Psoas muscle (tissue), 8 donors: ENCODE measurements at regions of chrX and their contacts with region 1.

Region 1: GRCh38 chrX:110450050-110450449 is 91.4 kb downstream of the RTL9 start:
- DNase-seq: peak; percentile 56 to 79
- ATAC-seq: peak; percentile 81 to 90 (median 88)
- H3K4me3 ChIP-seq: no peak overlapping the region
- H3K27ac ChIP-seq: no peak overlapping the region
- H3K4me1 ChIP-seq: no peaks in the 10 kb centered on the region
- H3K27me3 ChIP-seq: peaks cover 0 to 13% (median 0%) of the 10 kb centered on the region in 3 donors
- CTCF ChIP-seq: peak; percentile 76

Region 2: DNA sequence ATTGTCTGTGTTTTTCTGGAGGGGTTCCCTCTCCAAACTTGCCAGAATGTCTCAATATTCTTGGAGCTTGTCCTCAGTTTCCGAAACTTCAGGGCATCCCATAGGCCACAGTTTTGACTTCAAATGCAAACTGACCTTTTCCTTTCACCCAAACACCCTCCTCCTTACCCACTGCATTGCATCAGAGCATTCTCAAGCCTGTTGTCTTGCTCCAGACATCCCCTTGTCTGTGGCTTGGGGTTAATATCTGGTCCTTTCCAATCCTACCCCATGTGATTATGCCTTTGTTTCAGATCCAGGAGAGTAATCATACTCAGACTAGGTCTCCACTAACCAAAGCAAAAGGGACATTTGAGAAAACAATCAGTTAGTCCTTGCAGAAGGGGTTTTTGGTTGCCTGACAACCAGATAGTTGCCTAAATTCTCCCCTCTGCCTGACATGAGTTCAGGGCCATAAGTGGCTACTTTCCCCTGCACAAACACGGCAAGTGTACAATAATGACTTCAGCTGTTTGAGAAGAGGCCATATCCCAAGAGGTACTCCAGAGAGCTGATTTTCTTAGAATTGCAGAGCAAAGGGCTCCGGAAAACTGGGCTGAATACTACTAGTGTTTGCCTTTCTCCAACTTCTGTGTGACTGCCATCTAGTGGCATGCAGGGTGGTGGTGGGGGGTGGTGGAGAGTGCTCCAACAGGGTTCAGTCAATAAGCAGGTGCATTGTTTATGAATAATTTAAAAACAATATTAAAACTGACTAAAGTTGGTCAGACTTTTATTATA is 215.4 kb after region 1 on chrX:
- intact Hi-C with region 1: loop called (anchors 2 to 10 kb)
- DNase-seq: peak in 1 of 2 donors; percentile 18
- ATAC-seq: peak in 3 of 4 donors; percentile 45 to 71 (median 54)
- H3K4me3 ChIP-seq: no peak overlapping the region
- H3K27ac ChIP-seq: no peak overlapping the region
- H3K4me1 ChIP-seq: no peaks in the 10 kb centered on the region
- H3K27me3 ChIP-seq: peaks cover 0 to 18% (median 0%) of the 10 kb centered on the region in 3 donors
- CTCF ChIP-seq: peak; percentile 46

Region 3: GRCh38 chrX:110847334-110847733 is 397.3 kb after region 1 on chrX:
- intact Hi-C with region 1: loop called (anchors 2 to 5 kb)
- DNase-seq: no peak
- ATAC-seq: peak in 3 of 4 donors; percentile 64 to 77 (median 68)
- H3K4me3 ChIP-seq: no peak overlapping the region
- H3K27ac ChIP-seq: no peak overlapping the region
- H3K4me1 ChIP-seq: no peaks in the 10 kb centered on the region
- H3K27me3 ChIP-seq: peaks cover 0 to 28% (median 0%) of the 10 kb centered on the region in 3 donors
- CTCF ChIP-seq: peak; percentile 76

Region 4: DNA sequence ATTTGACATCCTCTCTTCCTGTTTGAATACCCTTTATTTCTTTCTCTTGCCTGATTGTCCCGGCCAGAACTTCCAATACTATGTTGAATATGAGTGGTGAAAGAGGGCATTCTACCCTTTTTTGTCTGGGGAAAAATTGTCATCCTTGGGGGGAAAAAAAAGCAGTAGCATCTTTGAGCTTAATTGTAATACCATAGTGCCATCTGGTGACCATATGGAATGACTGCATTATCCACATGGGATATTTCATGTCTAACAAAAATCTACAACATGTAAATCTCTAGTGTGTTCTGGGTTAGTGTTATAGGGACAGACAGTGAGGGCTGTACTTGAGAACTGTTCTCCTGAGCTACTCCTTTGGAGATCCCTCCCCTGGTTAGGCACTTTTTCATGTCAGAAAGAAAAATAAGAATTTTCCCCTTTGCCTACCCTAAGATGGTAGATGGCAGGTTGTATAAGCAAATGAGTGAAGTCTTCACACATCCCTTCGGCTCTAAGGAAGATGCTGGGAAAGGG is 794.2 kb after region 1 on chrX:
- intact Hi-C with region 1: loop called in 1 of 2 experiments (anchors 10 kb)
- DNase-seq: no peak
- ATAC-seq: no peak
- H3K4me3 ChIP-seq: no peak overlapping the region
- H3K27ac ChIP-seq: no peak overlapping the region
- H3K4me1 ChIP-seq: no peaks in the 10 kb centered on the region
- H3K27me3 ChIP-seq: peaks cover 0 to 14% (median 0%) of the 10 kb centered on the region in 3 donors
- CTCF ChIP-seq: peak; percentile 44